ENCODE measurements at regions of chr21 and their contacts with region 1.

Region 1: DNA sequence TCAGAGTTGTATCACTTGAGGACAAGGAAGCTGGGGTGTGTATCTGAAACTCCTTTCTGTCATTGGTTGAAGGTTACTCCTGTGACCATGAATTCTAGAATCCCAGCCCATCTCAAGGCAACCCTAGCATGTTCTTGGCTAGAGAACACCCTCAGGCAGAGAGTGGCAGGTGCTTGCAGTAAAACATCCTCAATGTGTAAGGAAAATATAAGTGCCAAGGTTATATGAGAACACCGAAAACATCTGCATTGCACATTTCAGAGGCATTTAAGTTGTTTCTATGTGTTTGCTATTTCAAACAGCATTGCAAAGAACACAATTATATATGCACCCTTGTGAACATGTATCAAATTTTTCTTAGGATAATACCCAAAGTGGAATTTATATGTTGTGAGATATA is 471.9 kb downstream of the USP25 start:
- DNase-seq: no peak
- ATAC-seq: no peak
- H3K4me3 ChIP-seq: no peak overlapping the region
- H3K27ac ChIP-seq: no peak overlapping the region
- H3K4me1 ChIP-seq: peaks cover 5% of the 10 kb centered on the region
- H3K27me3 ChIP-seq: no peaks in the 10 kb centered on the region
- CTCF ChIP-seq: no peak

Region 2: GRCh38 chr21:16258844-16259611 is 57.3 kb after region 1 on chr21:
- intact Hi-C with region 1: loop called (anchors 5 kb)
- DNase-seq: no peak
- ATAC-seq: peak; percentile 96 to 98 (median 97)
- H3K4me3 ChIP-seq: peak overlapping the region; percentile 50
- H3K27ac ChIP-seq: peak overlapping the region; percentile 82
- H3K4me1 ChIP-seq: peaks cover 14% of the 10 kb centered on the region
- H3K27me3 ChIP-seq: no peaks in the 10 kb centered on the region
- CTCF ChIP-seq: no peak